ENCODE measurements at regions of chr7 and their contacts with region 1.

Region 1: DNA sequence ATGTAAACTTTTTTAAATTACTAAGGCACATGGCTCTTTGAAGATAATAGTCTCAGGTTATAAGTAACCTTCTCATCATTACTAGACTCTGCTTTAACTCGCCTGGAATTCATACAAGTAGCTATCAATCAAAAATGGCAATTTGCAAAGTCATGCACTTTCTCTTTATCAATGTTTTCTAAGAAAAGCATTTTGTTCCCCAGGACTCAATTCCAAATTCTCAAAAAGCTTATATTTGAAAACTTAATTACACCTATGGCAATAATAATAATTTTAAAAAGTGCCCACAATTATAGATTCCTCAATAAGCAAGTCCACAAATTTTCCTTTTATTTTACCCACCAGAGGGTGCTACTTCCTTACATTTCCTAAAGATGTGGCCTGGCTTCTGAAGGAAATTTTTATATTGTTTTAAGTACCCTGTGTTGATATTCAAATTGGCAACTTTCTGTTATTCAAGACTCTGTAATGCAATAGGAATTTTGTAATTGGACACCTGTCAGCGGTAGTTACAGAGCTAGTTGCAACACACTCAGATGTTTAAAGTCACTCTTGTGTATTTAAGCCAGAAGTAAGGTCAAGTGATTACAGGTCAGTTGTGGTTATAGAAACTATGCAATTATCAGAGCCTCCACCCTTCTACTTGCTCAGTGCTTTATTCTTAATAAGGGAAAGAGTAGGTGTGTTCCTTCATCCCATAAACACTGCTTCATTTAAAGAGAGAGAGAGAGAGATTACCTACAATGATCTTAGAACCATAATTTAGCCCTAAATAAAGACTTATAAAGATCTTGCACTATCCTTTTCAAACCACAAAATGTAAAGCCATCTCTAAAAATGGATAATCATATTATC is 47.1 kb upstream of the HYAL4 start:
- DNase-seq: peak; percentile 40
- H3K4me3 ChIP-seq: no peak overlapping the region
- H3K27ac ChIP-seq: no peak overlapping the region
- H3K4me1 ChIP-seq: no peaks in the 10 kb centered on the region
- H3K27me3 ChIP-seq: no peaks in the 10 kb centered on the region
- CTCF ChIP-seq: peak; percentile 84
- EP300 ChIP-seq: no peak
- RAD21 ChIP-seq: peak; percentile 91

Region 2: GRCh38 chr7:123682690-123683089 is 115.2 kb before region 1 on chr7:
- CTCF ChIA-PET with region 1: interaction called, 22 read pairs
- POLR2A ChIA-PET with region 1: no interaction called
- DNase-seq: no peak
- H3K4me3 ChIP-seq: no peak overlapping the region
- H3K27ac ChIP-seq: peak overlapping the region in 1 of 2 experiments; percentile 43; a peak in 1 of 4 replicates
- H3K4me1 ChIP-seq: peaks cover 0 to 11% of the 10 kb centered on the region in 2 experiments; a peak in 2 of 4 replicates
- H3K27me3 ChIP-seq: no peaks in the 10 kb centered on the region
- CTCF ChIP-seq: peak; percentile 82
- EP300 ChIP-seq: no peak
- RAD21 ChIP-seq: peak; percentile 79

Region 3: GRCh38 chr7:123784263-123784662 is 13.6 kb before region 1 on chr7:
- CTCF ChIA-PET with region 1: interaction called, 26 read pairs
- POLR2A ChIA-PET with region 1: no interaction called
- DNase-seq: no peak
- H3K4me3 ChIP-seq: no peak overlapping the region
- H3K27ac ChIP-seq: no peak overlapping the region
- H3K4me1 ChIP-seq: no peaks in the 10 kb centered on the region
- H3K27me3 ChIP-seq: no peaks in the 10 kb centered on the region
- CTCF ChIP-seq: no peak
- EP300 ChIP-seq: no peak
- RAD21 ChIP-seq: no peak

Region 4: GRCh38 chr7:123846216-123846891 is 48.5 kb after region 1 on chr7:
- CTCF ChIA-PET with region 1: interaction called, 11 read pairs
- POLR2A ChIA-PET with region 1: no interaction called
- DNase-seq: no peak
- H3K4me3 ChIP-seq: no peak overlapping the region
- H3K27ac ChIP-seq: no peak overlapping the region
- H3K4me1 ChIP-seq: peaks cover 0 to 5% of the 10 kb centered on the region in 2 experiments; a peak in 1 of 4 replicates
- H3K27me3 ChIP-seq: no peaks in the 10 kb centered on the region
- CTCF ChIP-seq: no peak
- EP300 ChIP-seq: no peak
- RAD21 ChIP-seq: no peak

Region 5: DNA sequence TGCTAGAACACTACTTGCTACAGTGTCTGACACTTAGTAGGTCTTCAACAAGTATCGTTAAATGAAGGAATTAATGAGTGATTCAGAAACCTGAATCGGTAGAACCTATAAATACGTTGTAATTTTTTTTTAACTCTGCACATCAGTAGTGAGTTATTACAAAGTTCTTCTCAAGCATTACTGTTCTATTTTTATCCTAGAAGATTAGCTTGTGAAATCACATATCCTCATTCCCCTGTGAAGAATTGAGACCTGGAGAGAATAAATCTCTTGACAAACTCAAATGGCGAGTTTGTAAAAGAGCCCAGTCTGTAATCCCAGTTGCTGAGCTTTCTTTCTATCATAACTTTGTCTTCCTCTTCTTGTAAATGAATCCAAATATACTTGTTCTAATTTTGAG is 81.7 kb after region 1 on chr7:
- CTCF ChIA-PET with region 1: interaction called, 127 read pairs
- POLR2A ChIA-PET with region 1: no interaction called
- DNase-seq: no peak
- H3K4me3 ChIP-seq: no peak overlapping the region
- H3K27ac ChIP-seq: no peak overlapping the region
- H3K4me1 ChIP-seq: peaks cover 0 to 11% of the 10 kb centered on the region in 2 experiments; a peak in 2 of 4 replicates
- H3K27me3 ChIP-seq: no peaks in the 10 kb centered on the region
- CTCF ChIP-seq: no peak
- EP300 ChIP-seq: no peak
- RAD21 ChIP-seq: no peak

Region 6: GRCh38 chr7:124152859-124153692 is 355.2 kb after region 1 on chr7:
- CTCF ChIA-PET with region 1: interaction called, 12 read pairs
- POLR2A ChIA-PET with region 1: no interaction called
- DNase-seq: peak; percentile 34
- H3K4me3 ChIP-seq: no peak overlapping the region
- H3K27ac ChIP-seq: peak overlapping the region in 1 of 2 experiments; percentile 39; a peak in 2 of 4 replicates
- H3K4me1 ChIP-seq: peaks cover 0 to 6% of the 10 kb centered on the region in 2 experiments; a peak in 2 of 4 replicates
- H3K27me3 ChIP-seq: no peaks in the 10 kb centered on the region
- CTCF ChIP-seq: peak; percentile 60
- EP300 ChIP-seq: no peak
- RAD21 ChIP-seq: peak; percentile 66